Heart right ventricle (tissue), 16 donors: ENCODE measurements at regions of chr2 and their contacts with region 1.

Region 1: GRCh38 chr2:236168110-236169067 is at the start of gene GBX2:
- DNase-seq: no peak
- ATAC-seq: peak in 7 of 8 donors; percentile 19 to 60 (median 25)
- H3K4me3 ChIP-seq: peak within 1 kb of the TSS; percentile 25 to 52 (median 40)
- H3K27ac ChIP-seq: no peak within 1 kb of the TSS
- H3K4me1 ChIP-seq: peaks cover 22 to 90% (median 67%) of the 10 kb centered on the region in 9 donors
- H3K27me3 ChIP-seq: peaks cover 77 to 100% (median 100%) of the 10 kb centered on the region in 7 donors
- CTCF ChIP-seq: no peak
- total RNA-seq, gene GBX2: 0.12 to 0.22 (median 0.15) TPM in 3 of 10 donors, not detected in the others

Region 2: DNA sequence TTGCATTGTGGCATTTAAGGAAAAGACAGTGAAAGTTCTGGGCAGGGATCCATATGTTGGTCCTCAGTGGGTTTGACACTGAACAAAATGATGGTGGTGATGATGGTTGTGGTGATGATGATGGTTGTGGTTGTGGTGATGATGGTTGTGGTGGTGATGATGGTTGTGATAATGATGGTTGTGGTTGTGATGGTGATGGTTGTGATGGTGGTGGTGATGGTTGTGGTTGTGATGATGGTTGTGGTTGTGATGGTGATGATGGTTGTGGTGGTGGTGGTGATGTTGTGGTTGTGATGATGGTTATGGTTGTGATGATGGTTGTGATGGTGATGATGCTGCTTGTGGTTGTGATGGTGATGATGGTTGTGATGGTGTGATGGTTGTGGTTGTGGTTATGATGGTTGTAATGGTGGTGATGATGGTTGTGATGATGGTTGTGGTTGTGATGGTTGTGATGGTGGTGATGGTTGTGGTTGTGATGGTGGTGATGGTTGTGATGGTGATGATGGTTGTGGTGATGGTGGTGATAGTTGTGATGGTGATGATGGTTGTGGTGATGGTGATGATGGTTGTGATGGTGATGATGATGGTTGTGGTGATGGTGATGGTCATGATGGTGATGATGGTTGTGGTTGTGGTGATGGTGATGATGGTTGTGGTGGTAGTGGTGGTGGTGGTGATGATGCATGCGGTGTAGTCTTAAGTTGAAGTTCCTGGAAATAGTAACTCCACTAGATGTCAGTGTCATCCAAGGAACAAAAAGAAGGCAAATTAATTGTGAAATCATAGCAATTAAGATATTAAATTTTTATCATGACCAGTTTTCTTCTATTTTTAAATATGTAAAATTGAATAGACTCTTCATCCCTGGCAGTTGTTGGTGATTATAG is 365.6 kb before region 1 on chr2:
- intact Hi-C with region 1: loop called in 2 of 10 experiments (anchors 10 kb)
- DNase-seq: no peak
- ATAC-seq: no peak
- H3K4me3 ChIP-seq: no peak overlapping the region
- H3K27ac ChIP-seq: no peak overlapping the region
- H3K4me1 ChIP-seq: no peaks in the 10 kb centered on the region
- H3K27me3 ChIP-seq: no peaks in the 10 kb centered on the region
- CTCF ChIP-seq: peak in 4 of 9 donors; percentile 31 to 42 (median 39)

Region 3: DNA sequence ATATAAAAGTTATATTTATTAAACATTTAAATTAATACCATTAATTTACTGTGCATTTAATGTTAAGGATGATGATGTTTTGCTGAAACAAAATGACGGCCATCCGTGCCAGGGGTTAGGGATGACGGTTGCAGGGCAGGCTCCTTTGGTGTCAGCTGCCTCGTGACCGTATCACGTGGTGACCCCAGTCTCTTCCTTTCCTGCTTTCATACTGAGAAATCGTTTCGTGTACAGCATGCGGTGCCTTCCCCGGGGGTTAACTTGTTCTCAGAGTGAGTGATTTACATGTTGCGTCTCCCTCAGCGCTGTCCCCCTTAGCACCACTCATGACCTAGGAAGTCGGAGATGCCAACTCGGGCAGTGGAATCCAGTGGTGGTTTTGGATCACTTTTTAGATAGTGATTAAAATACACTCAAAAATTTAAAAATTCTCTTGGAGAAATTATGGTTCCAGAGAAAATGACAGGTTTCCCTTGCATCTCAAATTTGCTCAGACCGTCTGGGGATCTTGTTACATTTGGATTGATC is 291.1 kb before region 1 on chr2:
- intact Hi-C with region 1: no loop called
- DNase-seq: no peak
- ATAC-seq: no peak
- H3K4me3 ChIP-seq: no peak overlapping the region
- H3K27ac ChIP-seq: no peak overlapping the region
- H3K4me1 ChIP-seq: no peaks in the 10 kb centered on the region
- H3K27me3 ChIP-seq: no peaks in the 10 kb centered on the region
- CTCF ChIP-seq: no peak

Region 4: DNA sequence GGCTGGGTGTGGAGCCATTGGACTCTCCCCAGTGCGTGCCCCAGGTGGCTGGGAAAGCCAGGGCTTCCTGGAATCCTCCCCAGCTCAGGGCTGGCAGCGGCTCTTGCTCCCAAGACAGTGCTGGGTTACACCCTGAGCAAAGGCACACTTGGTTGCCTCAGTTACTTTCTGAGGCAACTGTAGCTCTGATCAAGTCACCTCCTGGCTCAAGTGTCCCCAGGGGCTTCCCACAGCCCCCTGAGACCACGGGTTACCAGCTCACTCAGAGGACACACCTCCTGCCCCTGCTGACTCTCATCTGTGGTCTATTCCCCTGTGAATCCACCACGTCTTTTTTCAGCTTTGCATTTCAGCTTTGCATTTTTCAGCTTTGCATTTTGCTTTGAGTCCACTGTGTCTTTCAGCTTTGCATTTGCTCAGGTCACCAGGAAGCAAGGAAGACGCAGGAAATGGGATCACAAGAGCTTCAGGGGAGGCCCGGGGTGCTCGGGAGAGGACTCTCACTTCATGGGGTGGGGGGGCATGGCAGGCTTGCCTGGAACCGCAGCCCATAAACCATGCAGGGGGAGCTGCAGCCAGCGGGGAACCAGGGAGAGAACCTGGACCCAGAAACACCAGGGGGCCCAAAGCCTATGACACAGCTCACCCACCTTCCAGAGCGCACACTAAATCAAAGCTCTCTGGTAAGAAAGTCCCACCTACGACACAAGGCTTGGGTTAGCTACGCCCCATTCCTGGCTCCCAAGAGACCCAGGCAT is 233.8 kb after region 1 on chr2:
- intact Hi-C with region 1: no loop called
- DNase-seq: no peak
- ATAC-seq: no peak
- H3K4me3 ChIP-seq: no peak overlapping the region
- H3K27ac ChIP-seq: no peak overlapping the region
- H3K4me1 ChIP-seq: no peaks in the 10 kb centered on the region
- H3K27me3 ChIP-seq: peaks cover 0 to 3% (median 0%) of the 10 kb centered on the region in 7 donors
- CTCF ChIP-seq: no peak